Activated T-helper 1 cell treated with anti-CD3 and anti-CD28 coated beads, Interleukin-12 subunit alpha, Interleukin-12 subunit beta, Interleukin-2, Interleukin-4 antibody, amounts not matched to agents 30 ng/mL and 10 ng/mL and 1 ng/mL, durations not matched to agents 14 hours and 24 hours and 36 hours (primary cell): ENCODE measurements at regions of chr12 and their contacts with region 1.

Region 1: GRCh38 chr12:102197789-102198188 is at the start of gene PMCH:
- DNase-seq: no peak
- H3K4me3 Mint-ChIP-seq: peak within 1 kb of the TSS; percentile 2
- H3K27ac Mint-ChIP-seq: peak within 1 kb of the TSS; percentile 75
- H3K4me1 Mint-ChIP-seq: peaks cover 20% of the 10 kb centered on the region
- H3K27me3 Mint-ChIP-seq: no peaks in the 10 kb centered on the region
- total RNA-seq, gene PMCH: 3.1 and 4.3 TPM in 2 replicates

Region 2: GRCh38 chr12:101697197-101697929 is 500.4 kb before region 1 on chr12 and contains the start of gene CHPT1:
- intact Hi-C with region 1: loop called (anchors 10 kb)
- DNase-seq: peak; percentile 34
- H3K4me3 Mint-ChIP-seq: peak within 1 kb of the TSS; percentile 88
- H3K27ac Mint-ChIP-seq: peak within 1 kb of the TSS; percentile 67
- H3K4me1 Mint-ChIP-seq: peaks cover 23% of the 10 kb centered on the region
- H3K27me3 Mint-ChIP-seq: peaks cover 33% of the 10 kb centered on the region
- total RNA-seq, gene CHPT1: 13.1 and 13.3 TPM in 2 replicates

Region 3: GRCh38 chr12:101759396-101760047 is 438.3 kb before region 1 on chr12:
- intact Hi-C with region 1: no loop called
- DNase-seq: no peak
- H3K4me3 Mint-ChIP-seq: no peak overlapping the region
- H3K27ac Mint-ChIP-seq: no peak overlapping the region
- H3K4me1 Mint-ChIP-seq: no peaks in the 10 kb centered on the region
- H3K27me3 Mint-ChIP-seq: no peaks in the 10 kb centered on the region

Region 4: DNA sequence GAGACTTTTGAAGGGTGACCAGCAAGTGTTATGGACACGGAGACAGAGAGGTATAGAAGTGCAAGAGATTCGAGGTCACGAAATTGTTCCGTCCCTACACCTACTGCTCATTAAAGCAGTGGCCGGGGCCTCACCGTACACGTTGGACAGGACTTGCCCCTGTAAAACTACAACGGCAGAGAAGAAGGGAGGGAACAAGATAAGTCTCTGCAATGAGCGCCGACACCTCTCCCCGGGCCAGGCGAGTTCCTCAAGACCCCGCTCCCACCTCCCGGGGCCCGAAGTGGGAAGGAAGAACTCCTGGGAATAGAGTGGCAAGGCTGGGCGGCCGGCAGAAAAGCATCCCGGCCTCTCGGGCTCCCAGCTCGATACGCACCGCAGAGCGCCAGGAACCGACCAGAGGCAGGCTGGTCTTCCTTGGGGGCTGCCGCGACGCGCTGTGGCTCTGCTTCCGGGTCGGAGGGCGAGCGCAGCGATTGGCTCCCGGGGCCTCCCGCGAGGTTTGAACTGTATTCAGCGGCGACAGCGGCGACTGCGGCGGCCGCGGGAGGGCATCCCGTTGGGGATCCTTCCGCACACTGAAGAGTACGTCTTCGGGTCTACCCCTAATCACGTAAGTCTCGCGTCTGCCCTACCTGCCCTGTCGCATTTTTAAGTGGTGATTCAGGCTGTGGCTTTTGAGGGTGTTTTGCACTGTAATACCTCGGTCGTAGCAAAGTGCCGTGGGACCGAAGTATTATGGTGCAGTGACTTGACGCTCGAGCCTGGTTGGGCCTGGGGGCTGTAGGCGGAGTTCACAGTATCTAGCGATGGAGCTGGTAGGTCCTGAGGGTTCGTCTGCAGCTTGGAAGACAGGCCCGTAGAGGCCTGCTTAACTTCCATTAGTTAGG is 77.9 kb before region 1 on chr12 and contains the starts of genes NUP37 and PARPBP:
- intact Hi-C with region 1: loop called (anchors 1 kb)
- DNase-seq: peak; percentile 92
- H3K4me3 Mint-ChIP-seq: peak within 1 kb of the TSS; percentile 92
- H3K27ac Mint-ChIP-seq: peak within 1 kb of the TSS; percentile 95
- H3K4me1 Mint-ChIP-seq: peaks cover 48% of the 10 kb centered on the region
- H3K27me3 Mint-ChIP-seq: no peaks in the 10 kb centered on the region
- total RNA-seq, gene NUP37: 81.5 and 84.1 TPM in 2 replicates
- total RNA-seq, gene PARPBP: 23.5 and 25.1 TPM in 2 replicates

Region 5: GRCh38 chr12:102182635-102183034 is 15.2 kb before region 1 on chr12:
- intact Hi-C with region 1: loop called (anchors 2 kb)
- DNase-seq: no peak
- H3K4me3 Mint-ChIP-seq: no peak overlapping the region
- H3K27ac Mint-ChIP-seq: no peak overlapping the region
- H3K4me1 Mint-ChIP-seq: no peaks in the 10 kb centered on the region
- H3K27me3 Mint-ChIP-seq: no peaks in the 10 kb centered on the region

Region 6: DNA sequence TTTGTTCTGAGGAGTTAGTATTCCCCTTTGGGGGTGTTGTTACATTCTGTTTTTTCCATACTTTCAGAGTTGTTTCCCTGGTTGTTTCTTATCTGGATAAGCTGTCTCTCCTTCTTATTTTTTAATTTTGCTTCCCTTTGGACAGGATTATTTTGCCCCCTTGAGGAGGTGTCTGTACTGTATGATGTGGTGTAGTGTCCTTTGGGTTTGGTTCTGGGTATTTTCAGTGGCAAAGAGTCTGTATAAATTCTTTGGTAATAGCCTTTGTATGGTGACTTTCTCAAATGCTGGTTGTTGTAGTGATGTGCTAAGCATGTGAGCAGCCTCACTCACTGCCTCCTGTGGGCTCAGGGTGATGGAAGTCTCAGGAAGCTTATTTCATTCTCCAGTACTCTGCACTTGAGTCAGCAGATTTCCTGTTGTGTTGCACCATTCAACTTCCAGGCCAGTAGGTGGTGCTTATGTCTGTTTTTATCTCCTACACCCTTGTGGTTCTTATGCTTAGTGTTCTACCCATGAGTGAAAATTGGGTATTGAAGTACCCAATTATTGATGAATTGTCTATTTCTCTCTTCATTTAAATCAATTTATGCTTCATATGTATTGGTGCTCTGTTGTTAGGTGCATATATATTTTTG is 103.2 kb after region 1 on chr12:
- intact Hi-C with region 1: loop called (anchors 5 kb)
- DNase-seq: peak; percentile 28
- H3K4me3 Mint-ChIP-seq: no peak overlapping the region
- H3K27ac Mint-ChIP-seq: no peak overlapping the region
- H3K4me1 Mint-ChIP-seq: peaks cover 21% of the 10 kb centered on the region
- H3K27me3 Mint-ChIP-seq: peaks cover 9% of the 10 kb centered on the region

Region 7: DNA sequence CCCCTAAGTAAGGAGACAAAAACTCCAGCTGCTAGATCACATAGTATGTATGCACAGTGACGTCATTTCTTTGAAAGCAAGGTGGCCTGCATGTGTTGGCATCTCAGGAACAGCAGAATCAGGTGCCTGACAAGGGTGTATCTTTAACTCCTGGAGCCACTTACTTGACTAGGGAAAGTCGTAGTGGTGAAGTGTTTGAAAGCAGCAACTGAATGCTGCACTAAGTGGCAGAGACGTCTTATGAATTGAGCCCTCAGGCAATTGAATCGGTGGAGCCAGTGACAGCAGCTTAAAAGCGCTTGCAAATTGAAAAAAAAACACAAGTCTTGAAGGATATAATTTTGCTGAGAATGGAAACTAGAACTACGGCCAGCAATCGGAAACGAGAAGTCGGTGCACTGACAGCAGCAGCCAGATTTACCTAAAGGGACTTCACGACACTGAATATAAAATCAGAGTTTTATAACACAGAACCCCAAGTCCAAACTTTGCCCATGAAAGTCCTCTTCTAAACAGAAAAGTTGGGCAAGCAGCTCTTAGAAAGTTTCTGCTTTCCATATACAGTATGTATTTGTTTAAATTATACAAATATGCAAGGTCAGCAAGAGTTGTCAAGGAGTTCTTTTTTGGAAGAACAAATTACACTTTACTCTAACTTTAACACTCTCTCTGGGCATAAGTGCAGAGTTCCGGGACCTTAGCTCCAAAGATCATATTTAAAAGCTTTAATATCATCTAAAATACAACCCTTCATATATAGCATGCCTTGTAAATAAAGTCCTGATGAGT is 281.5 kb after region 1 on chr12:
- intact Hi-C with region 1: loop called (anchors 2 kb)
- DNase-seq: no peak
- H3K4me3 Mint-ChIP-seq: no peak overlapping the region
- H3K27ac Mint-ChIP-seq: no peak overlapping the region
- H3K4me1 Mint-ChIP-seq: peaks cover 47% of the 10 kb centered on the region
- H3K27me3 Mint-ChIP-seq: no peaks in the 10 kb centered on the region

Region 8: DNA sequence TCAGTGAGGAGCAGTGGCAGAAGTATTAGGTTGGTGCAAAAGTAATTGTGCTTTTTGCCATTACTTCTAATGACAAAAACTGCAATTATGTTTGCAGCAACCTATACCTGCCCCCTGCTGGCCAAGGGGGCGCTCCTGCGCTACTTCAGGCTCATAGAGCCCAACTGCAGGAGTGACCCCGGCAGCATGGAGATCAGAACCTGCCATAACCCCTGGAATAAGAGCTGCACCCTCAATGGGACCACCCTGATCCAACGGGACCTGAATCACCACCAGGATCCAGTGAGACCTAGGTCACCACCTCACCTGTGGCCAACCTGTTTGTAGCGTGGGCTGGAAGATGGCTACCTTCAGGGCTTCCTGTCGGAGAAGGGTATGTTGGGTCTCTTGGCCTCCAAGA is 1306.2 kb after region 1 on chr12:
- intact Hi-C with region 1: loop called (anchors 2 kb)
- DNase-seq: peak; percentile 28
- H3K4me3 Mint-ChIP-seq: no peak overlapping the region
- H3K27ac Mint-ChIP-seq: no peak overlapping the region
- H3K4me1 Mint-ChIP-seq: peaks cover 41% of the 10 kb centered on the region
- H3K27me3 Mint-ChIP-seq: peaks cover 19% of the 10 kb centered on the region